CD4-positive, alpha-beta T cell (primary cell): ENCODE measurements at regions of chr5 and their contacts with region 1.

Region 1: DNA sequence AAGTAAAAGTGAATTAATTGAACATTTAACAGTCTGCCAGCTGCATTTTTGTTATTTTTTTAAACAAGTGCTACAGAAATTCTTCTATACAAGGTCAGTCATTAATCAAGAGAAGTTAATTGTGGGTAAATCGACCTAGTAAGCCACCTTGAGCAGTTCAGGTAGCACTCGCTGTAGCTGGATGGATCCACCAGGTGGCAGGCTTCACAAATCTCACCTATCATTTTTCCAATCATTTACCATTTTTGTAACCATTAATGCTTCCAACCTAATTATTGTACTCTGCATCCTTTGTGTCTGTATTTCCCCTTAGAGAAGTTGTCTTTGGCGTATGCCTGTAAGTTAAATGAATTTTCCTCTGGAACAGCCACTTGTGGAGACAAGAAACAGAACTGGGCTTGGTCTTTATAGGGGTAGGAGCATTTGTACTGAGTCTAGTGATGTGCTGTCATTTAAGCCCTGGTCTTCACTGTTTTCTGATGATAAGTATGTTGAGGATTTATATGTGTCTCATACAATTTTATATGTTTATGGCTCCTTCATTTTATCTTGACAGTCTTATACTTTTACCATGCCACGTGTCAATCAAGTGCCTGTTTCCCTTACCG is 39.5 kb downstream of the CD180 start:
- DNase-seq: peak; percentile 42 to 81 (median 50)
- ATAC-seq: peak; percentile 55
- H3K4me3 ChIP-seq: no peak overlapping the region
- H3K4me3 Mint-ChIP-seq: peak overlapping the region; percentile 17
- H3K27ac ChIP-seq: no peak overlapping the region
- H3K27ac Mint-ChIP-seq: peak overlapping the region; percentile 71
- H3K4me1 ChIP-seq: peaks cover 45% of the 10 kb centered on the region
- H3K4me1 Mint-ChIP-seq: peaks cover 59% of the 10 kb centered on the region
- H3K27me3 ChIP-seq: no peaks in the 10 kb centered on the region
- H3K27me3 Mint-ChIP-seq: no peaks in the 10 kb centered on the region
- CTCF ChIP-seq: peak; percentile 96

Region 2: GRCh38 chr5:67215583-67216471 is 58.7 kb after region 1 on chr5:
- CTCF ChIA-PET with region 1: interaction called, 12 read pairs
- POLR2A ChIA-PET with region 1: interaction called, 15 read pairs
- intact Hi-C with region 1: no loop called
- DNase-seq: peak; percentile 58 to 91 (median 73)
- ATAC-seq: peak; percentile 95
- H3K4me3 ChIP-seq: peak overlapping the region; percentile 22
- H3K4me3 Mint-ChIP-seq: peak overlapping the region; percentile 49
- H3K27ac ChIP-seq: peak overlapping the region; percentile 74 to 78
- H3K27ac Mint-ChIP-seq: peak overlapping the region; percentile 94
- H3K4me1 ChIP-seq: peaks cover 63% of the 10 kb centered on the region
- H3K4me1 Mint-ChIP-seq: peaks cover 63% of the 10 kb centered on the region
- H3K27me3 ChIP-seq: no peaks in the 10 kb centered on the region
- H3K27me3 Mint-ChIP-seq: no peaks in the 10 kb centered on the region
- CTCF ChIP-seq: no peak